ENCODE measurements at regions of chr7 and their contacts with region 1.

Region 1: GRCh38 chr7:155003376-155004214 is 671 bp upstream of the PAXIP1 start:
- DNase-seq: peak; percentile 32 to 91 (median 83)

Region 2: DNA sequence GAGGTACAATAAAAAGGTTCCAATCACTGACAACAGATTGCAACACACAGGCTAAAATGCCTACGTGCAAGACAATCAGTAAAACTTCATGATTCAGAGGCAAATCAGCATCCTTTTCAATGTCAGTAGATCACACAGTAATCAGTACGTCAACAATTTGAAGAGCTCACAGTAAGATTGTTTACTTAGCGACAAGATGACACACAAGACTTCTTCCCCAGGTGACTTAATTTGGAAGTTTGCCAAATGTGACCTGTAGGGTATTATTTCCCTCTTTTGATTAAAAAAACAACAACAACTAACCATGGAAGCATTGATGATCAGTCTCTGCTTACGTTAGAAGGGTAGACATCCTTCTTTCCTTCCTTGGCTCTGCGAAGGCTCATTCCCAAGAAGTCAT is 454.3 kb before region 1 on chr7:
- intact Hi-C with region 1: no loop called
- DNase-seq: no peak

Region 3: GRCh38 chr7:155298834-155299534 is 295.4 kb after region 1 on chr7:
- intact Hi-C with region 1: loop called (anchors 5 kb)
- DNase-seq: peak; percentile 97 to 100 (median 99)

Measured in head of caudate nucleus (tissue), 42 donors.